ENCODE measurements at regions of chr1 and their contacts with region 1.

Region 1: GRCh38 chr1:40385437-40386358 is 12.2 kb downstream of the SMAP2 start:
- DNase-seq: peak; percentile 59
- H3K4me3 Mint-ChIP-seq: peak overlapping the region; percentile 85
- H3K27ac Mint-ChIP-seq: peak overlapping the region; percentile 99
- H3K4me1 Mint-ChIP-seq: peaks cover 86% of the 10 kb centered on the region
- H3K27me3 Mint-ChIP-seq: no peaks in the 10 kb centered on the region

Region 2: GRCh38 chr1:40003156-40004148 is 382.2 kb before region 1 on chr1:
- intact Hi-C with region 1: no loop called
- DNase-seq: no peak
- H3K4me3 Mint-ChIP-seq: no peak overlapping the region
- H3K27ac Mint-ChIP-seq: no peak overlapping the region
- H3K4me1 Mint-ChIP-seq: no peaks in the 10 kb centered on the region
- H3K27me3 Mint-ChIP-seq: peaks cover 20% of the 10 kb centered on the region

Region 3: GRCh38 chr1:40344597-40344996 is 41.1 kb before region 1 on chr1:
- intact Hi-C with region 1: loop called (anchors 5 kb)
- DNase-seq: no peak
- H3K4me3 Mint-ChIP-seq: no peak overlapping the region
- H3K27ac Mint-ChIP-seq: peak overlapping the region; percentile 59
- H3K4me1 Mint-ChIP-seq: peaks cover 40% of the 10 kb centered on the region
- H3K27me3 Mint-ChIP-seq: no peaks in the 10 kb centered on the region

Region 4: DNA sequence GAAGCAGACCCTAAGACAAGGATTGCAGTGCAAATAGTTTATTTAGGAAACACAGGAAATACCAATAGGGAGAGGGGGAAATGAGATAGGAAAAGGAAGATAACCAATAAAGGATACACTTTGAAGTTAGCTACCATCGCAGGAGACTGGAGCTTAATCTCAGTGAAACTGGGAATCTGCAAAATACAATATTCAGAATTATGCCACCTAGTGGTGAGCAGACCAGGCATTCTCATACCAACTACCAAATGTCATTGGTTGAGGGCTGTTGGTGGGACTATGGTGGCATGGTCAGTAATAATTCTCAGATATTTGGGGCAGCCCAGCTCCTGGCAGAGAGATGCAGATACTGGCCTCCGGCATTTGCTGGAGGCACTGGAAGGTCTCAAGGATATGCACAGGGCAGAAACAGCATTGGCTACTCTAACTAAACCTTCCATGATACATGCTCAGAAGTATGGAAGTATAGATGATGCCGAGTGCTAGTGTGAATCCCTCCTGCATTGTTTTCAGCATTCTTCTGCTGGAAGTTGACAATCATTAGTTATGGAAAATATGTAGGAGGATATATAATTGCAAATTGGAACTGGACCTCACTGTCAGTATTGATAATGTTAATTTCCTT is 52.8 kb after region 1 on chr1:
- intact Hi-C with region 1: no loop called
- DNase-seq: no peak
- H3K4me3 Mint-ChIP-seq: no peak overlapping the region
- H3K27ac Mint-ChIP-seq: no peak overlapping the region
- H3K4me1 Mint-ChIP-seq: peaks cover 3% of the 10 kb centered on the region
- H3K27me3 Mint-ChIP-seq: no peaks in the 10 kb centered on the region